ENCODE measurements at regions of chr19 and their contacts with region 1.

Region 1: GRCh38 chr19:58543826-58544590 is at the start of gene TRIM28:
- DNase-seq: peak; percentile 95 to 99
- H3K4me3 ChIP-seq: peak within 1 kb of the TSS; percentile 75 to 82
- H3K27ac ChIP-seq: peak within 1 kb of the TSS; percentile 90 to 94
- H3K4me1 ChIP-seq: peaks cover 15 to 25% of the 10 kb centered on the region in 2 donors
- H3K27me3 ChIP-seq: no peaks in the 10 kb centered on the region
- CTCF ChIP-seq: peak in 1 of 3 experiments; percentile 6
- total RNA-seq, gene TRIM28: 222 TPM

Region 2: GRCh38 chr19:58380722-58381466 is 163.1 kb before region 1 on chr19 and contains the start of gene ZNF837:
- intact Hi-C with region 1: no loop called
- DNase-seq: peak; percentile 99
- H3K4me3 ChIP-seq: peak within 1 kb of the TSS; percentile 82 to 86
- H3K27ac ChIP-seq: peak within 1 kb of the TSS; percentile 84 to 91
- H3K4me1 ChIP-seq: peaks cover 8 to 24% of the 10 kb centered on the region in 2 donors
- H3K27me3 ChIP-seq: no peaks in the 10 kb centered on the region
- CTCF ChIP-seq: no peak
- total RNA-seq, gene ZNF837: not detected

Region 3: GRCh38 chr19:58572818-58573657 is 29.0 kb after region 1 on chr19 and contains the start of gene MZF1:
- intact Hi-C with region 1: loop called (anchors 1 kb)
- DNase-seq: peak; percentile 100
- H3K4me3 ChIP-seq: peak within 1 kb of the TSS; percentile 81 to 92
- H3K27ac ChIP-seq: peak within 1 kb of the TSS; percentile 95 to 98
- H3K4me1 ChIP-seq: peaks cover 4 to 20% of the 10 kb centered on the region in 2 donors
- H3K27me3 ChIP-seq: no peaks in the 10 kb centered on the region
- CTCF ChIP-seq: no peak
- total RNA-seq, gene MZF1: 77.1 TPM

Measured in ascending aorta (tissue), 2 donors.